B cell (primary cell): ENCODE measurements at regions of chr4 and their contacts with region 1.

Region 1: DNA sequence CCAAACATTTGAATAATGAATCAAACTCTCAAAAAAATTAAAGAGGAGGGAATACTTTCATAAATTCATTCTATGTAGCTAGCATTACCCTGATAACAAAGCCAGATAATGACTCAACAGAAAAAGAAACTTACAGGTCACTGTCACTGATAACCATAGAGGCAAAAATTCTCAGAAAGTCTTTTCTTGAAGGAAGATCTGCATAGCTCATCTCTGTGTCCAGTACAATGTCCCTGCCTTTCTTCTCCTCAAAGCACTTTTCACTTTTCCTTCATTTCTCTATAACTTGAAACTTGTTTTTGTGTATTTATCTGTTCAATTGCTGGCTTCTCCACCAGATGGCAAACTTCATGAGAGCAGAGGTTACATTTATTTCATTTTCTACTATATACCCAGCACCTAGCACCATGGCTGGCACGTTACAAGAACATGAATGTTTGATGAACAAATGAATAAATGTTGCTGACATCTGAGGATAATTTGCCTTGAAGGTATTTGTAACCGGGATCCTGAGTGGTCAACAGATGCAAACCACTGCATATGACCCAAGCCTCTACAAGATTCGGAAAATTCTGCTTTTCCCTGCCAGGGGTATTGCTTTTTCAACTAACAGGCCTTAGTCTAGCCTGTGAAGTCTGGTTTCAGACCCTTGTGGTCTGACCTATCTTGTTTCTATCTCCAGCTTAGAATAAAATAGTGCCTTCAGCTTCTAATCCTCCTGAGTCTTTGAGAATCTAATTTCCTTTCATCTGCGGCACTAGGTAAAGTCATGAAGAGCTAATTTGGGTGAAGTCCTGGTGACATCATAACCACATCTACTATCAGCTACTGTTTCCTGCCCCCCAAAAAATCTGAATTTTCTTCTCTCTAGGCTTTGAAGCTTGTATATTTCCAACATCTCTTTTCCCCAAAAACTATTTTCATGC is 52.5 kb upstream of the ANTXR2 start:
- DNase-seq: peak; percentile 74
- ATAC-seq: peak; percentile 83
- H3K4me3 ChIP-seq: no peak overlapping the region
- H3K4me3 Mint-ChIP-seq: no peak overlapping the region
- H3K27ac ChIP-seq: no peak overlapping the region
- H3K27ac Mint-ChIP-seq: no peak overlapping the region
- H3K4me1 ChIP-seq: peaks cover 9 to 13% of the 10 kb centered on the region in 2 donors
- H3K4me1 Mint-ChIP-seq: peaks cover 21% of the 10 kb centered on the region
- H3K27me3 ChIP-seq: no peaks in the 10 kb centered on the region
- H3K27me3 Mint-ChIP-seq: no peaks in the 10 kb centered on the region
- CTCF ChIP-seq: peak; percentile 79

Region 2: GRCh38 chr4:80072744-80073472 is 52.6 kb before region 1 on chr4 and contains the start of gene ANTXR2:
- CTCF ChIA-PET with region 1: interaction called, 9 read pairs
- POLR2A ChIA-PET with region 1: interaction called, 3 read pairs
- intact Hi-C with region 1: loop called (anchors 1 kb)
- DNase-seq: peak; percentile 88
- ATAC-seq: peak; percentile 73
- H3K4me3 ChIP-seq: peak within 1 kb of the TSS; percentile 87 to 96 (median 88)
- H3K4me3 Mint-ChIP-seq: peak within 1 kb of the TSS; percentile 99
- H3K27ac ChIP-seq: peak within 1 kb of the TSS; percentile 91 to 97
- H3K27ac Mint-ChIP-seq: peak within 1 kb of the TSS; percentile 99
- H3K4me1 ChIP-seq: peaks cover 27% of the 10 kb centered on the region in 2 donors
- H3K4me1 Mint-ChIP-seq: peaks cover 52% of the 10 kb centered on the region
- H3K27me3 ChIP-seq: no peaks in the 10 kb centered on the region
- H3K27me3 Mint-ChIP-seq: no peaks in the 10 kb centered on the region
- CTCF ChIP-seq: no peak
- total RNA-seq, gene ANTXR2: 63.0 and 68.8 TPM in 2 replicates

Region 3: DNA sequence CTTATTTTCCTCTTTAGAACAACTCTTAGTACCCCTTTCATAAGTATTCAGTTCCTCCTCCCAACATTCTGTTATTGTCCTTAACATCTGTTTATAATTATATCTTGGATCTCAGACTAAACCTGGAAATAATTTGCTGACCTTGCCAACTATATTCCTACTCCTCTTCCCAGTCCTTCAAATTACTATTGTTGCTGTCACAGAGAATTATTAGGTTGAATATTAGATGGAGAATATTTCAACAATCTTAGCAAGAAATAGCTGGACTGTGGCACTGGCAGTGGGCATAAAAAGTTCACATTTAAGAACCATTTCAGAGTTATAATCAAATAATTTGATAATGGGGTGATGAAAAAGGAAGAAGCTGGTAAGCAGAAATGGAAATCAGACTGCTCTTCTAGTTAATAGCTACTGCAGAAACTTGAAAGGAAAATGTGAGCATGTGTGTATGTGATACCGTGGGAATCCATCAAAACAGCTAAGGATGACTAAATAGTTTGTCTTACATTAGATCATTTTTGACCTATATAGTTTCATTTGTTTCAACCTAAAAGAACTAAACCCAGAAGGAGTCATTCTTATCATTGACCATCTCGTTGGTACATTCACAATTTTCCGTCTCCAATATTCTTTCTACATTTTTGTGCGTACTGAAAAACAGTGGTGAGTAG is 28.5 kb after region 1 on chr4:
- CTCF ChIA-PET with region 1: interaction called, 16 read pairs
- POLR2A ChIA-PET with region 1: no interaction called
- intact Hi-C with region 1: no loop called
- DNase-seq: no peak
- ATAC-seq: no peak
- H3K4me3 ChIP-seq: no peak overlapping the region
- H3K4me3 Mint-ChIP-seq: no peak overlapping the region
- H3K27ac ChIP-seq: no peak overlapping the region
- H3K27ac Mint-ChIP-seq: no peak overlapping the region
- H3K4me1 ChIP-seq: no peaks in the 10 kb centered on the region
- H3K4me1 Mint-ChIP-seq: no peaks in the 10 kb centered on the region
- H3K27me3 ChIP-seq: no peaks in the 10 kb centered on the region
- H3K27me3 Mint-ChIP-seq: peaks cover 11% of the 10 kb centered on the region
- CTCF ChIP-seq: no peak

Region 4: DNA sequence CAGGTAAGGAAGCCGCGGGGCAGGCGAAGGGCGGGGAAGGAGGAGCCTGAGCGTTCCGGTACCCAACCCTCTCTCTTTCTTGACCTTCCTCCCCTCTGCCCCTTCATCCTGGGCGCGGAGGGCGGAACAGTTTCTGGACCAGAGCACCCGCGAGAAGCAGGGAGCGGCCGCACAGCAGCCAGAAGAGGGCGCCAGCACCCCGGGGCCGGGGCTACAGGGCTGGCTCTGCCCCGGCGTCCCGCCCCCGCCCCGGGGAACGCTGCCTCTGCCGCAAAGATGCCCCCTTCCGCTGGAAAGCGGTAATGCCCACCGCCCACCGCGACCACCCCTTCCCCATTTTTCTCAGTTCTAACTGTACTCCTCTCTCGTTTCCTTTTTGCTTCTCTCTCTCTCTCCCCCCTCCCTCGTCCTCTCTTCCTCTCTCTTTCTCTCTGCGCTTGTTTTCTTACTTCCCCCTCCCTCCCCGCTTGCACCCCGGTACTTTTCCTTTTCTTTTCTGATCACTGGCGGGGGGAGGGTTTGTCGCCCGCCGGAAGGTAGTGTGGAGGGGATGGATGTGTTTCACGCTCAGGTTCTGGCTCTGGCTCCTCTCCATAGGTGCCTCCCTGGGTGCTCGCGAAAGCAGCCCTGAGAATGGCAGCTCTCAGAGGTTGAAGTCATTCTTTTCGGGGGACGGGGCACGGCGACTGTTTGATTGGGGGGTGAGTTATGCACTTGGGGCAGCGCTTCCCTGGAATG is 58.7 kb after region 1 on chr4:
- CTCF ChIA-PET with region 1: interaction called, 199 read pairs
- POLR2A ChIA-PET with region 1: interaction called, 10 read pairs
- intact Hi-C with region 1: loop called (anchors 1 kb)
- DNase-seq: peak; percentile 94
- ATAC-seq: peak; percentile 79
- H3K4me3 ChIP-seq: peak overlapping the region; percentile 64 to 99 (median 91)
- H3K4me3 Mint-ChIP-seq: peak overlapping the region; percentile 99
- H3K27ac ChIP-seq: peak overlapping the region; percentile 80 to 82
- H3K27ac Mint-ChIP-seq: peak overlapping the region; percentile 98
- H3K4me1 ChIP-seq: peaks cover 39 to 42% of the 10 kb centered on the region in 2 donors
- H3K4me1 Mint-ChIP-seq: peaks cover 56% of the 10 kb centered on the region
- H3K27me3 ChIP-seq: peaks cover 0 to 26% (median 0%) of the 10 kb centered on the region in 4 experiments
- H3K27me3 Mint-ChIP-seq: peaks cover 3% of the 10 kb centered on the region
- CTCF ChIP-seq: peak; percentile 100

Region 5: GRCh38 chr4:80202190-80202711 is 76.7 kb after region 1 on chr4:
- CTCF ChIA-PET with region 1: interaction called, 53 read pairs
- POLR2A ChIA-PET with region 1: no interaction called
- intact Hi-C with region 1: loop called (anchors 1 kb)
- DNase-seq: peak; percentile 90
- ATAC-seq: peak; percentile 60
- H3K4me3 ChIP-seq: peak overlapping the region; percentile 41 to 82 (median 77)
- H3K4me3 Mint-ChIP-seq: peak overlapping the region; percentile 89
- H3K27ac ChIP-seq: peak overlapping the region; percentile 53 to 82
- H3K27ac Mint-ChIP-seq: peak overlapping the region; percentile 91
- H3K4me1 ChIP-seq: peaks cover 17 to 24% of the 10 kb centered on the region in 2 donors
- H3K4me1 Mint-ChIP-seq: peaks cover 24% of the 10 kb centered on the region
- H3K27me3 ChIP-seq: peaks cover 0 to 21% (median under 1%) of the 10 kb centered on the region in 4 experiments
- H3K27me3 Mint-ChIP-seq: peaks cover 8% of the 10 kb centered on the region
- CTCF ChIP-seq: peak; percentile 86

Region 6: DNA sequence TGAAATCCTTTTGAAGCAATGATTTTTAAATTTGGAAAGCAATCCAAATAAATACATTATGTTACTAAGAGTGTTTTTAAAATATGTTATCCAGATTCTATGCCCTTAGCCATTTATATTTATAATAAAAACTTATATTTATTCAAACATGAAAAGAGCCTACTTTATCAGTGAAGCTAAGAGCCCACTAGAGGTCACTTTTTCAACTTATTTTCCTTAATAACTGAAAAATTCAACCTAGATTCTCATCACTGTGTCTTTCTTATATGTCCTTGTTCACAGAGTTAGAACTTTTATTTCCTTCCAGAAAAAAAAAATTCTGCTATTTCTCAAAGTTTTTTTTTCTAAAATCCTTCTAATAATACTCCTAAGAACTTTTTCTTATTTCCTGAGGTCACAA is 95.6 kb after region 1 on chr4:
- CTCF ChIA-PET with region 1: interaction called, 38 read pairs
- POLR2A ChIA-PET with region 1: no interaction called
- intact Hi-C with region 1: no loop called
- DNase-seq: no peak
- ATAC-seq: no peak
- H3K4me3 ChIP-seq: no peak overlapping the region
- H3K4me3 Mint-ChIP-seq: no peak overlapping the region
- H3K27ac ChIP-seq: no peak overlapping the region
- H3K27ac Mint-ChIP-seq: no peak overlapping the region
- H3K4me1 ChIP-seq: no peaks in the 10 kb centered on the region
- H3K4me1 Mint-ChIP-seq: no peaks in the 10 kb centered on the region
- H3K27me3 ChIP-seq: peaks cover 0 to 11% (median 5%) of the 10 kb centered on the region in 4 experiments
- H3K27me3 Mint-ChIP-seq: peaks cover 9% of the 10 kb centered on the region
- CTCF ChIP-seq: peak; percentile 33

Region 7: DNA sequence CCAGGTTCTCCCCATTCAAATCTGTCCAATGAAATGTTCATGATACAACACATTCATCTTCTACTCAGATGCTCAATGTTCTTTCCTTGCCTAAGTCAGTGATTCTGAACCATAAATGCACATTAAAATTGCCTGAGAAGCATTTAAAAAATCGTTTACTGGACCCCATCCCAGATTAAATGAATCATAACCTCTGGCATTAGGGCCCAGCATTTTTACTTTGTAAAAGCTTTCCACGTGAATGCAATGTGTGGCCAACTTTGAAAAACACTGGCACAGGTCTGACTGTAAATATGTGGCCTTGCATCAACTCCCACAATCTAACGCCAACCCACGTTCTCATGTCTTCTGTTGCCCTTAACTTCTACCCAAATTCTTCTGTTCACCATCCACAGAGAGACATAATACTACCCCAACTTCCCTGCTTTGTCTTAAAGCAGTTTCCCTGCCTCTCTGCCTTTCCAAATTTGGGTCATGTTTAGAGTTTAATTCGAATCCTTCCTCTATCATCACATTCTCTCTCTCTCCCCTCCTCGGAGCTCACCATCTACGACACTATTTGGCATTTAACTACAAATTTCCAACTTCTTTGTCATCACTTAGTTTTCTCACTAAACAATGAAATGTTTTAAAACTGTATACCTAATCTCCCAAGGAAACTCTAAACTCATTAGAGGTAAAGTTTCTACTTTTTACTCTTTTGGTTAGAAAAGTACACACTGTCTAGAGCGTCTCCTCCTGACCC is 1010.8 kb after region 1 on chr4:
- CTCF ChIA-PET with region 1: no interaction called
- POLR2A ChIA-PET with region 1: no interaction called
- intact Hi-C with region 1: no loop called
- DNase-seq: no peak
- ATAC-seq: no peak
- H3K4me3 ChIP-seq: no peak overlapping the region
- H3K4me3 Mint-ChIP-seq: no peak overlapping the region
- H3K27ac ChIP-seq: no peak overlapping the region
- H3K27ac Mint-ChIP-seq: no peak overlapping the region
- H3K4me1 ChIP-seq: no peaks in the 10 kb centered on the region
- H3K4me1 Mint-ChIP-seq: no peaks in the 10 kb centered on the region
- H3K27me3 ChIP-seq: no peaks in the 10 kb centered on the region
- H3K27me3 Mint-ChIP-seq: no peaks in the 10 kb centered on the region
- CTCF ChIP-seq: no peak